Left colon (tissue), 2 donors: ENCODE measurements at regions of chr6 and their contacts with region 1.

Region 1: DNA sequence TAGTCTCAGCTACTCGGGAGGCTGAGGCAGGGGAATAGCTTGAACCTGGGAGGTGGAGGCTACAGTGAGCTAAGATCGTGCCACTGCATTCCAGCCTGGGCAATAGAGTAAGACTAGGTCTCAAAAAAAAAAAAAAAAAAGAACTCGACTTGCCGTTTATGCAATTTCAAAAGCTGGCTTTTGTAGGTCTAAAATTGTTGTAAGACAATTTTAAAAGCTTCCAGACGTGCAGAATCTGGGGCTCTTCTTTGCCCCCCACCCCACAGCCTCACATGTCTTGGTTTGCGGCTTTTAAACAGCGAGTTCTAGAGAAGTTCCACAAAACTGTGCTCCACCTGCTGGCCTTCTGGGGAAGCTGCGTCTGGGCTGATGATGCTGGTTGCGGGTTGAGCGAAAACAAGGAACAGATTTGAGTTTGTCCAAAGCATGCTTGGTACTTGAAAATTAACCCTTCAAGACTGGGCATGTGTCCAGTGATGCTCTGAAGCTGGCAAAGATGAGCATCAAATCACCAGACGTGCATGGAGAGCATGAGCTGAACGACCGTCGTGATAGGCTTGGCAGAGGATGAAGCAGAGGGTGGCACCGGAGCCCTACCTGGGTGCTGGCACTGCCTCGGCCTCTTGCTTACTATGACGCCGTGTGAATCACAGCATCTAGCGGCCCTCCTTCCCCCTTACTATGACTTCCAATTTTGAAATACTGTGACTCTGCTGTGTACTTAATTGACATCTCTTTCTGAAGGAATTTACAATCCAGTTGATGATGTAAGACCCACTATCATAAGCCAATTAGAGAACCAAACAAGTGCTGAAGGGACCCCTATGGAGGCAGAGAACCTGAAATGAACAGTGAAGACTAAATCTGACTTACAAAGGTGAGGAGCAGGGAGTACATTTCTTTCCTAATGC is 171.4 kb downstream of the GMPR start:
- DNase-seq: peak; percentile 57 to 73
- ATAC-seq: peak; percentile 70

Region 2: DNA sequence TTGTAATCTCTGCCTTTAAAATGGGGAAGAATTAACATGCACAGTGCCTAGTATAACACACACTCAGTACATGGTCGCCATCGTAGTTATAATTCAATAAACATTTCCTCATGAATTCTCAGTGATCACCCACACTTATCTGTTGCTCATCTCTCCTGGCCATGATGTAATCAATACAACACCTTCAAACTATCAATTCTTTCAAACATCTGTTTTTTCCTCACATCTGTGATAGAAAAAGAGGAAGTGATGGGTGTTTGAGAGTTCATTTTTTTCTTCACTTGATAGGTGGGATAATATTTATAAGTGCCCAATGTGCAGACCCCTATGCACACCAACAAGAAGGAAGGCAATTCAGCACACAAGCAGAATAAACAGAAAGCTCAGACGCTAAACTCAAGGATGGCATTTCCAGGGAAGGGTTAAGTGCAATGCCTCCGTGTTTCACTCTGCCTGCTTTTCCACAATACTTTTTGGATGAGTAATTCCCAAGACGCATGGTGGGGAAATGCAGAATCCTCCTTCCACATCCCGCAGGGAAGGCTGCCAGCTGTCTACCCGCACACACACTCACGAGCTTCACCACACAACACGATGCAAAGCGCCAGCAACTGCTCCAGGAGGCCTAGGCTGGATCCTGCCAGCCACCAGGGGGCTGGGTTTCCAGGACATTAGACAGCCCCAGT is 71.1 kb before region 1 on chr6:
- intact Hi-C with region 1: loop called (anchors 5 to 10 kb)
- DNase-seq: peak; percentile 52 to 73
- ATAC-seq: peak; percentile 49